ENCODE measurements at regions of chr1 and their contacts with region 1.

Region 1: GRCh38 chr1:90568436-90568835 is 148.7 kb downstream of the BARHL2 start:
- DNase-seq: no peak
- H3K4me3 ChIP-seq: no peak overlapping the region
- H3K27ac ChIP-seq: no peak overlapping the region
- H3K4me1 ChIP-seq: no peaks in the 10 kb centered on the region
- H3K27me3 ChIP-seq: no peaks in the 10 kb centered on the region
- CTCF ChIP-seq: no peak
- POLR2A ChIP-seq: no peak

Region 2: GRCh38 chr1:90579212-90579802 is 10.9 kb after region 1 on chr1:
- CTCF ChIA-PET with region 1: interaction called, 24 read pairs
- POLR2A ChIA-PET with region 1: no interaction called
- dilution Hi-C with region 1: no loop called
- intact Hi-C with region 1: no loop called
- DNase-seq: peak; percentile 51
- H3K4me3 ChIP-seq: no peak overlapping the region
- H3K27ac ChIP-seq: no peak overlapping the region
- H3K4me1 ChIP-seq: no peaks in the 10 kb centered on the region
- H3K27me3 ChIP-seq: no peaks in the 10 kb centered on the region
- CTCF ChIP-seq: peak; percentile 36 to 46
- POLR2A ChIP-seq: no peak

Measured in endothelial cell of umbilical vein (primary cell).